ENCODE measurements at regions of chr16 and their contacts with region 1.

Region 1: DNA sequence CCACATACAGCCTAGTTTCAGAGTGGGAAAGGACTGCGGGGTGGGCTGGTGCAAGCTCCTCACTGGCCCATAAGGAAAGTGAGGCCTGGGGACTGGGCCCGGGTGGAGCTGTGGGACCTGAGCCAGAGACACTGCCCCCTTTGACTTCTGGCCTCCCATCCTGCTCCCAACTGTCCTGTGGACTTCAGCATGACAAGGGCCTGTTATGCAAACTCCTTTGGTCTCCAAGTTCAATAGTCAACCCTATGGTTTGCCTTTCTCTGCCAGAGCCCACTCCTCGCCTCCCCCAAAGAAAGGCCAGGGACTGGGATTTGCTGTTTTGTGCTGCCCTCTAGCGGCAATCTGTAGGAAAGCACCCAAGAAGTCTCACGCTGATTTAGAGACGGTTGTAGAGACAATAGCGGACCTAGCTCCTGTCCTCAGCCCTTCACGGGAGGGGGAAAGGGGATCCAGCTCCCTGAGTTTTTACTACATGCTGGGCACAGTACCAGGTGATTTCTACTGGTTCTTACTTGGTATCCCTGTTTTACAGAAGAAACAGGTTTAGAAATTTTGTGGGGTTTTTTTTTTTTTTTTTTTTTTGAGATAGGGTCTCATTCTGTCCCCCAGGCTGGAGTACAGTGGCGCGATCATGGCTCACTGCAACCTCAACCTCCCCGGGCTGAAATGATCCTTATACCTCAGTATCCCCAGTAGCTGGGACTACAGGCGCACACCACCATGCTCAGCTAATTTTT is 1.2 kb upstream of the TLCD3B start:
- DNase-seq: peak; percentile 51
- H3K27ac ChIP-seq: no peak overlapping the region
- CTCF ChIP-seq: peak; percentile 82

Region 2: DNA sequence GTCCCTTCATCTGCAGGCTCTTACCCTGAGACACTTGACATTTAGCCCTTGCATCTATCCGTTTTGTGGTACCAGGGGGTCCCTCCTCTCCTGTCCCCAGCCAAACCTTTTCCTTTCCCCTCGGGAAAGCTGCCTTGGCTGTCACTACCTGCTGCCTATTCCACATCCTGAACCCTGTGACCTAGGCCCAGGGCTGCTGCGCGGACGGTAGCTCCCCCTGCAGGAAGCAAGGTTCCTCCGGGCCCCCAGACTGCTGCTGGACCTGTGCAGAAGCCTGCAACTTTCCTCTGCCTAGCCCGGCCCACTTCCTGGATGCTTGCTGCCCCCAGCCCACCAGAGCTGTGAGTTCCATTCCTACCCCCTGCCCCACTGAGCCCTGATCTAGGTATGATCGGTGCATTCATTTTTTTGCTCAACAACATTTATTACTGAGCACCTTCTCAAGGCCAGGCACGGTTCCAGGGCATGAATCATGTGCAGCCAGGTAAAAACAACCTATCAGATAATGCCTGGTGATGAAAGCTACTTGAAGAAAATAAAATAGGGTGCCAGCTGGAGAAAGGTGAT is 22.8 kb after region 1 on chr16:
- CTCF ChIA-PET with region 1: interaction called, 13 read pairs
- POLR2A ChIA-PET with region 1: interaction called, 4 read pairs
- DNase-seq: peak; percentile 78
- H3K27ac ChIP-seq: peak overlapping the region; percentile 90
- CTCF ChIP-seq: peak; percentile 55

Measured in RWPE1 (cell line).